Activated CD4-positive, alpha-beta T cell treated with anti-CD3 and anti-CD28 coated beads for 36 hours (primary cell): ENCODE measurements at regions of chr10 and their contacts with region 1.

Region 1: GRCh38 chr10:74176380-74177139 is 25.5 kb downstream of the ADK start:
- DNase-seq: peak; percentile 98
- ATAC-seq: peak; percentile 94
- H3K4me3 Mint-ChIP-seq: peak overlapping the region; percentile 89
- H3K27ac Mint-ChIP-seq: peak overlapping the region; percentile 95
- H3K4me1 Mint-ChIP-seq: peaks cover 37% of the 10 kb centered on the region
- H3K27me3 Mint-ChIP-seq: no peaks in the 10 kb centered on the region

Region 2: DNA sequence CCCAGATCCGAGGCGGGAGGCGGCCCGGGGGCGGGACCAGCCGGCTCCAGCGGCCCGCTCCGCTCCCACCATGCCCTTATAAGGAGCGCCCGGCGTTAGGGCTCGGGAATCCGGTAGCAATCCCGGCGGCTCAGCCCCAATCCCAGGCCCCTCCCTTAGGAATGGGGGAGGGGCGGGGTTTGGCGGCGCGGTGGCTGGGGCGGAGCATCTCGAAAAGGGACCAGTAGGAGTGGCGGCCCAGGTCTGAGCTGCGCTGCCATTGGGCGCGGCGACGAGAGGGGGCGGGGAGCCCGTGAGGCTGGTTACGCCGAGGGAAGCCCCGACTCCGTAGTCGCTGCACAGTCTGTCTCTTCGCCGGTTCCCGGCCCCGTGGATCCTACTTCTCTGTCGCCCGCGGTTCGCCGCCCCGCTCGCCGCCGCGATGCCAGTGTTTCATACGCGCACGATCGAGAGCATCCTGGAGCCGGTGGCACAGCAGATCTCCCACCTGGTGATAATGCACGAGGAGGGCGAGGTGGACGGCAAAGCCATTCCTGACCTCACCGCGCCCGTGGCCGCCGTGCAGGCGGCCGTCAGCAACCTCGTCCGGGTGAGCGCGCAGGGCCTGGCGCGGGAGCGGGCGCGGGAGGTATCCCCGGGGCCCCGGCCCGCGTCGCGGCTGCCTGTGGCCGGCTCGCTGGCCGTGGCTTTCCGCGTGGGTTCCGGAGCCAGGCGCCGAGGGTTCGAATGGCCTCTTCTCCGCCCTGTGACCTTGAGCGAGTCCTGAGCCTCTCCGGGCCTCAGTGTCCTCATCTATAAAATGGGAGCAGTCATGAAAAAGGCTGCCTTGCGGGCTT is 178.6 kb before region 1 on chr10 and contains the start of gene VCL:
- CTCF ChIA-PET with region 1: no interaction called
- POLR2A ChIA-PET with region 1: no interaction called
- intact Hi-C with region 1: loop called in 1 of 2 experiments (anchors 2 kb)
- DNase-seq: peak; percentile 97
- ATAC-seq: peak; percentile 98
- H3K4me3 Mint-ChIP-seq: peak within 1 kb of the TSS; percentile 89
- H3K27ac Mint-ChIP-seq: peak within 1 kb of the TSS; percentile 97
- H3K4me1 Mint-ChIP-seq: peaks cover 39% of the 10 kb centered on the region
- H3K27me3 Mint-ChIP-seq: no peaks in the 10 kb centered on the region
- total RNA-seq, gene VCL: 20.7 to 22.7 TPM

Region 3: GRCh38 chr10:74189999-74190421 is 13.4 kb after region 1 on chr10:
- CTCF ChIA-PET with region 1: interaction called, 16 read pairs
- POLR2A ChIA-PET with region 1: interaction called, 4 read pairs
- intact Hi-C with region 1: no loop called
- DNase-seq: peak; percentile 35
- ATAC-seq: peak; percentile 73
- H3K4me3 Mint-ChIP-seq: peak overlapping the region; percentile 69
- H3K27ac Mint-ChIP-seq: peak overlapping the region; percentile 96
- H3K4me1 Mint-ChIP-seq: peaks cover 60% of the 10 kb centered on the region
- H3K27me3 Mint-ChIP-seq: no peaks in the 10 kb centered on the region

Region 4: DNA sequence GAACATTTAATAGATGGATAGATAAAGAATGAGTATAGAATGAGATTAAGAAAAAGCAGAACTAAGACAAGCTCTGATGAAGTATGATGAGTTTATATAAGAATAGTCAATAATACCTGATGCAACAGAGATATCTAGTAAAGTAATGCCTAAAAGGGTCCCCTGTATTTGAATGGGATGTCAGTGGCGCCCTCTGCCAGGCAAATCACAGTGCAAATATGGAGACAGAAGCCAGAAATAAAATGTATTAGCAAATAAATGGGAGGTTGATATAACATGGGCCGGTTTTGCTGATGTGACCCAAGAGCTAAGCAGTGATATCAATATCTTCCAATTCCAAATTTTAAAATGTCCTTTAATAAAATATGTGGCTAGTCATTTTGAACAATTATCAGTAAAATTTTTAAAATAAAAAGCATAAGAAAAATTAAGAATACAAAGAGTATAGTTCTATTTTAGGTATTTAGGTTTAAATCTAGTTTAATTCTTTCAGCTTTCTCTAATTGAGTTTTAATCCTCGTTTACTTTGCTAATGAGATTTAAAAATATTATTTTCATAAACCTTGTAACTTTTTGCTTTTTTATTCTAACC is 37.1 kb after region 1 on chr10:
- CTCF ChIA-PET with region 1: interaction called, 7 read pairs
- POLR2A ChIA-PET with region 1: no interaction called
- intact Hi-C with region 1: loop called in 1 of 2 experiments (anchors 5 kb)
- DNase-seq: peak; percentile 66
- ATAC-seq: peak; percentile 58
- H3K4me3 Mint-ChIP-seq: no peak overlapping the region
- H3K27ac Mint-ChIP-seq: no peak overlapping the region
- H3K4me1 Mint-ChIP-seq: peaks cover 4% of the 10 kb centered on the region
- H3K27me3 Mint-ChIP-seq: no peaks in the 10 kb centered on the region